Panc1 (cell line): ENCODE measurements at regions of chr15 and their contacts with region 1.

Region 1: GRCh38 chr15:73305331-73306211 is 63.2 kb downstream of the HCN4 start:
- DNase-seq: peak; percentile 41
- ATAC-seq: peak; percentile 94
- H3K4me3 ChIP-seq: no peak overlapping the region
- H3K27ac ChIP-seq: no peak overlapping the region
- H3K4me1 ChIP-seq: no peaks in the 10 kb centered on the region
- H3K27me3 ChIP-seq: no peaks in the 10 kb centered on the region
- CTCF ChIP-seq: peak; percentile 85

Region 2: DNA sequence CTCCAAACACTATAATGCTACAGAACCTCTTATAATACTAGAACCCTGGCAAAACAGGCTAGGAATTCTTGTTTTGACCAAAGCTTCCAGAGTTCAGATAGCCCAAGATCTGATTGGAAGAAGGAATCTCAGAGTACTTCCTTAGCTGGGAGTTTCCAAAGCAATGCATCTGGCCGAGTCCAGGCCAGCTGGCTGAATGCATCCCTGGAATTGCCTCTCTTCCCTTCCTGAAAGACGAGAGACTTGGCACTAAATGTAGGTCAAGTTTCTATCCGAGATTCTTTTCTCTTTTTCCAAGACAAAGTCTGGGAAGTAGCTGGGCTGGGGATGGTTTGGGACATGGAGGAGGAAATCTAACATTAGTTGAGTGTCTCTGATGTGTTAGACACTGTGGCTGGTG is 453.3 kb before region 1 on chr15:
- CTCF ChIA-PET with region 1: no interaction called
- POLR2A ChIA-PET with region 1: no interaction called
- in situ Hi-C with region 1: no loop called
- intact Hi-C with region 1: no loop called
- DNase-seq: no peak
- ATAC-seq: no peak
- H3K4me3 ChIP-seq: no peak overlapping the region
- H3K27ac ChIP-seq: no peak overlapping the region
- H3K4me1 ChIP-seq: no peaks in the 10 kb centered on the region
- H3K27me3 ChIP-seq: peaks cover 5% of the 10 kb centered on the region
- CTCF ChIP-seq: no peak

Region 3: GRCh38 chr15:73550190-73550589 is 244.6 kb after region 1 on chr15:
- CTCF ChIA-PET with region 1: no interaction called
- POLR2A ChIA-PET with region 1: no interaction called
- in situ Hi-C with region 1: no loop called
- intact Hi-C with region 1: loop called (anchors 5 kb)
- DNase-seq: no peak
- ATAC-seq: no peak
- H3K4me3 ChIP-seq: no peak overlapping the region
- H3K27ac ChIP-seq: no peak overlapping the region
- H3K4me1 ChIP-seq: no peaks in the 10 kb centered on the region
- H3K27me3 ChIP-seq: no peaks in the 10 kb centered on the region
- CTCF ChIP-seq: no peak

Region 4: DNA sequence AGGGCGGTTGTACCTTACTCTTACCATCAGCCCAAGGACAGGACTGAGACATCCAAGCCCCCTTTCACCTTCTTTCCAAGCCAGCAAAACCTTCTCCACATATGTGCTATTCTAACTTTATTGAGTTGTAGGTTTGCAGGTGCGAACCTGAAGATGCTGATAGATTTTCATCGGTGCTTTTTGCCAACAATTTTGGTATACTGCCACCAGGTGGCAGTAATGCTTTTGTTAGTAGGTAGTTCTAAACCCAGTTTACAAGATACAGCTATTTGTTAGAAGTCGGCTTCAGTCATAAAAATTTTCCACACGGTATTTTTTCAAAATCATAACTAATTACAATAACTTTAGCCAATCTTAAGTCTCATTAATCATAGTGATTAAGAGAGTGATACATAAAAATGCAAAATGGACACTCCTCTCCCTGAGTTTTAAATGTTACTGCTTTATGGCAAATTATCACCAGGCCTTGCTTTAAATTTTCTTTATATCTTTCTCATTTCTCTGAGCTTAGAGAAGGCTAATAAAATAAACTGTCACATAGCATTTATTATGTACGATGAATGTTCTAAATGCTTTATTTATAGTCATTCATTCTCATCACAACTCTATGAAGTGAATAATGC is 568.4 kb after region 1 on chr15:
- CTCF ChIA-PET with region 1: no interaction called
- POLR2A ChIA-PET with region 1: no interaction called
- in situ Hi-C with region 1: no loop called
- intact Hi-C with region 1: no loop called
- DNase-seq: peak; percentile 46
- ATAC-seq: peak; percentile 74
- H3K4me3 ChIP-seq: no peak overlapping the region
- H3K27ac ChIP-seq: no peak overlapping the region
- H3K4me1 ChIP-seq: no peaks in the 10 kb centered on the region
- H3K27me3 ChIP-seq: peaks cover 37% of the 10 kb centered on the region
- CTCF ChIP-seq: peak; percentile 80